Panc1 (cell line): ENCODE measurements at regions of chr7 and their contacts with region 1.

Region 1: DNA sequence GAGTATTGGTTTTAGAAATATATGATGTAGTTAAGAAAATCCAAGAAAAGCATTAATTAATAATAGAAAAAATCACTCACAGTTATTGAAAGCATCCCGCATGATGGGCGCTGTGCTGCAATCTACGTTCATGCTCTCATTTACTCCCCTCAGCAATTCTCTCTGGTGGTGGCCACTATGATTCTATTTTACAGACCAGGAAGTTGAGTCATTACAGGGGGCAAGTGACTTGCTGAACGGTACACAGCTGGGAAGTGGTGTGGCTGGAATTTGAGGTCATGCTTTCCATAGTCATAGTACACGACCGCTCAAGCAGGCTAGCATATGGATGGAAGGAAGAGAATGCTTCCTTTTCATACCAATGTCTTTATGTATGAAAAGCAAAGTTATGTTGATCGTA is 117.4 kb downstream of the TES start:
- DNase-seq: no peak
- ATAC-seq: 0 out of 2 replicates have a peak, but pooled peaks have one; percentile 55
- H3K4me3 ChIP-seq: no peak overlapping the region
- H3K27ac ChIP-seq: peak overlapping the region; percentile 59
- H3K4me1 ChIP-seq: no peaks in the 10 kb centered on the region
- H3K27me3 ChIP-seq: no peaks in the 10 kb centered on the region
- CTCF ChIP-seq: no peak

Region 2: GRCh38 chr7:116236020-116236630 is 91.6 kb before region 1 on chr7:
- CTCF ChIA-PET with region 1: no interaction called
- POLR2A ChIA-PET with region 1: no interaction called
- in situ Hi-C with region 1: no loop called
- intact Hi-C with region 1: no loop called
- DNase-seq: no peak
- ATAC-seq: peak; percentile 68
- H3K4me3 ChIP-seq: no peak overlapping the region
- H3K27ac ChIP-seq: no peak overlapping the region
- H3K4me1 ChIP-seq: peaks cover 19% of the 10 kb centered on the region
- H3K27me3 ChIP-seq: no peaks in the 10 kb centered on the region
- CTCF ChIP-seq: peak; percentile 64; the same call in 1 of the 2 replicates

Region 3: DNA sequence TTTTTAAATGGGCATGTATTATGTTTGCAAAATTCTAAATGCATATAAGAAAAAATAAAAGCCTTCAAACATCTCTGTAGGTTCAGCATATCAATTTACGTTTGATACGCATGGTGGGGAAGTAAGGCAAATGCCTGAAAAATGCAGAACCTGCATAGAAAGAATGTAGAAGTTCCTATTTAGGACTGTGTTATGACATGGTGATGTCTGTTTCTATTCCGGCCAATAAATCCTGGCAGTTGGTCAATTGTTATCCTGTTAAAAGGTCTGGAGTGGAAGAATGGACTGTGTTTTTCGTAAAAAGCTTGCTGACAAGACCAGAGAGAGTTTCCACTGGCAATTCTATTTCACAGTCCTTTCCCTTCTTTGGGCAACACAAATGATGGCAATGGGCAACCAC is 122.2 kb after region 1 on chr7:
- CTCF ChIA-PET with region 1: no interaction called
- POLR2A ChIA-PET with region 1: interaction called, 13 read pairs
- in situ Hi-C with region 1: no loop called
- intact Hi-C with region 1: no loop called
- DNase-seq: no peak
- ATAC-seq: no peak
- H3K4me3 ChIP-seq: no peak overlapping the region
- H3K27ac ChIP-seq: peak overlapping the region; percentile 96
- H3K4me1 ChIP-seq: peaks cover 26% of the 10 kb centered on the region
- H3K27me3 ChIP-seq: no peaks in the 10 kb centered on the region
- CTCF ChIP-seq: no peak